Heart left ventricle (tissue), 16 donors: ENCODE measurements at regions of chr10 and their contacts with region 1.

Region 1: GRCh38 chr10:100338434-100339036 is 8.5 kb upstream of the SCD start:
- DNase-seq: peak; percentile 63 to 83 (median 68)
- ATAC-seq: peak; percentile 52 to 85 (median 76)
- H3K4me3 ChIP-seq: no peak overlapping the region
- H3K27ac ChIP-seq: no peak overlapping the region
- H3K4me1 ChIP-seq: peaks cover 0 to 25% (median 0%) of the 10 kb centered on the region in 12 donors
- H3K27me3 ChIP-seq: peaks cover 0 to 19% (median 3%) of the 10 kb centered on the region in 9 donors
- CTCF ChIP-seq: peak; percentile 82 to 96 (median 90)
- POLR2A ChIP-seq: no peak

Region 2: DNA sequence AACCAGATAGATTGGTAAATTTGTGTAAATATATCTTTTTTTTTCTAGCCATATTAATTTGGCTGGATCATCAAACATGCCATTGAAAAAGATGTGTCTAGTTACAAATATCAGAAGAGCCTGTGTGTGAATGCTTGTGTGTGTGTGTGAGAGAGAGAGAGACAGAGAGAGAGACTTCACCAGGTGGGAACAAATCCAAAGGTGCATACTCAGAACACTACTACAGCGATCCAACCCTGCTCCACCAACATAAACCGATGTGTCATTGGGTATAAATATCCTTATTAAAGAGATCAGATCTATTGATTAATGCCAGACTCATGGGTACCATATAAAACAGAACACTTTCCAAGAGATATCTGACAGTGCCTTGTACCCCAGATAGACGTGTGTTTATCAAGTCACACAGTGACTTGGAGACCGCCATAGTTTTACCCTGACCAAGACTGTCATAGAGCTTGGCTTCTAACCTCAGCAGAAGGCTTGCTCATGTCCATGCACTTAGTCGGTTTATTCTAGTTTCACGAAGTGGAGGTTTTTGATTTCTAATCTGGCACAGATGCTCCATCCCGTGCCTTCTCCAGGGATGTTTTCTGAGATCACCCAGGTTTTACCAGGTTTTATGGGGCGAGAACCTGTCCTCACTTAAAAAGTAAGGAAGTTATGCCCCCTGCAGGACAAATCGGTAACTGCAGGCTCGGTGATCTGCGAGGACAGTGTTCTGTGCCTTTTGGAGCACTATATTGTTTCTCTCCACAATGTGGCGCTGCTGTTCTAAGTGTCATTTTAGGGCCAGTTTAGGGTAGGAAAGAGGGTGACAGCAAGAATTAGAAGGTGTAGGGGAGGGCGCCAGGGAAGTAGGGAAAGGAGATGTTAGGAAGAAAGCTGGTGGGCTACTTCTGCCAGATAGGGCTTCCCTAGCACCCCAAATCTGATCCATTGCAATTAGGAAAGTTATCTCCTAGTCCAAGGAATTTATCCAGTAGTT is 95.0 kb after region 1 on chr10:
- intact Hi-C with region 1: loop called (anchors 1 to 2 kb)
- DNase-seq: peak; percentile 83 to 89 (median 88)
- ATAC-seq: peak; percentile 58 to 92 (median 91)
- H3K4me3 ChIP-seq: no peak overlapping the region
- H3K27ac ChIP-seq: no peak overlapping the region
- H3K4me1 ChIP-seq: no peaks in the 10 kb centered on the region
- H3K27me3 ChIP-seq: no peaks in the 10 kb centered on the region
- CTCF ChIP-seq: peak; percentile 95 to 100 (median 99)
- POLR2A ChIP-seq: no peak

Region 3: DNA sequence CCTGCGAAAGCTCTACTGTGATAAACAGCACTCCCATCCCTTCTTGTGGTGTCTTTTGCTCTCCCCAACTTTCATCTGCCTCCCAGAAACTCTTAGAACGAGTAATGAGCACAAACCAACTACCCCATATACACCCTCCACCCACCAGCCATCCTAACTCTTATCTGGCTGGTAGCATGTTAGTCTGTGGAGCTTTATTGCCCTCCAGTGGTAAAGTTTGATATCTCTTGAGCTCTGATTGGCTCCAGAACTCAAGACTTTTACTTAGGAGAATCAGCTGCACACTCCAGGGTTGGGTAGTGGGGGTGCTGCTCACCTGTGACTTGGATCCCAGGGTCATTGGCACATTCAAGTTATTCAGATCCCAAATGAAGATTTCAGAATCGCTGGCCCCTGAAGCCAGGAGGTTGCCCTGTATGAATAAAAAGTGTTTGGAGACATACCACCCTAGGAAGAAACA is 170.2 kb after region 1 on chr10:
- intact Hi-C with region 1: loop called in 2 of 10 experiments (anchors 10 kb)
- DNase-seq: no peak
- ATAC-seq: peak in 2 of 4 donors; percentile 26 to 44
- H3K4me3 ChIP-seq: no peak overlapping the region
- H3K27ac ChIP-seq: no peak overlapping the region
- H3K4me1 ChIP-seq: peaks cover 0 to 22% (median 0%) of the 10 kb centered on the region in 12 donors
- H3K27me3 ChIP-seq: no peaks in the 10 kb centered on the region
- CTCF ChIP-seq: peak in 6 of 12 donors; percentile 17 to 39 (median 22)
- POLR2A ChIP-seq: no peak

Region 4: DNA sequence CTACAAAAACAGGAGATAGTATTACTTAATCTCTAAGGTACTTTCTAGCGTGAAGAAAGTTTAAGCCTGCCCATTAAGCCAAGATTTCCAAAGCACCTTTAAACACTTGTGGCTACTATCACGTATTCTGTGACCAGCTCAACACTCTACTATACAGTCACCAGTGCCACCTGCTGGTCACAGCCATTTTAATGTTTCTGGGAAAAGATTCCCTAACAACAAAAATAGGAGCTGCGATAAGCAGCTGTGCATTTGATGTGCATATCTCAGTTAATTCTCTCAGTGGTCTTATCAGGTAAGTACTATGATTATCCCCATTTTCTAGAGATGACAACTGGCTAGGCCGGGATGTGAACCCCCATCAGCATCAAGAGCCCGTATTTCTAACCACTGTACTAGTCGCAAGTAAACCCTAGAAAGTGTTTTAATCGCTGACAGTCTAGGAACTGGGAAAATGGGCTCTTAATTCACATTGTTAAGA is 180.3 kb after region 1 on chr10:
- intact Hi-C with region 1: loop called in 9 of 10 experiments (anchors 2 to 10 kb)
- DNase-seq: peak in 4 of 5 donors; percentile 46 to 72 (median 52)
- ATAC-seq: peak; percentile 53 to 79 (median 69)
- H3K4me3 ChIP-seq: peak overlapping the region; percentile 52 to 82 (median 60)
- H3K27ac ChIP-seq: peak overlapping the region in 8 of 12 donors; percentile 36 to 75 (median 68)
- H3K4me1 ChIP-seq: peaks cover 0 to 18% (median 10%) of the 10 kb centered on the region in 12 donors
- H3K27me3 ChIP-seq: peaks cover 0 to 5% (median 0%) of the 10 kb centered on the region in 9 donors
- CTCF ChIP-seq: peak; percentile 51 to 76 (median 66)
- POLR2A ChIP-seq: no peak

Region 5: DNA sequence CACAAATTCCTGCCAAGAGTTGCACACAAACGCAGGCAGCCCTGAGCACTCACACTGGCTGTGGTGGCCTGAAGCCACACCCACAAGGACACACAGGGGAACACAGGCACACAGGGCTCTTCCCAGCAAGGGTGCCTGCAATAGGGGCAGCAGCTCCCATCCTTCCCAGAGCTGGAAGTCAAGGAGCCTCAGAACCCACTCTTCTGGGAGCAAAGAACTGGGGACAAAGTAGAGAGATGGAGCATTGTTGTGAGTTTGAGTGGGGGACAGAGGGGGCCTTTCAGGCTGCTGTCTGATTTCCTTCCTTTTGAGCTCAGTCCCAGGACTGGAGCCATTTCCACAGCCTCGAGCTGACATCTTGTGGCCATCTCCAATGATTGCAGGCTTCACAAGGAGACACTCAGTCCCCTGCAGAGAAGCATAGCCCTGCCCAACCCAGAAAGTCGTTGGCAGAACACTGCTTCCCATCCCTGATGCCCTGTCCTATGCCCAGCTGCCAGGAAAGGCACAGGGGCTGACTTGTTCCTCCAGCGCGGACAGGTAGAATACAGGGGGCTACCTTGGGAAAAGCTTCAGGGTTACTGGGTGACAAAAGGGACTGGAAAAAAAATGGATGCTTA is 539.9 kb after region 1 on chr10:
- intact Hi-C with region 1: loop called in 2 of 10 experiments (anchors 5 to 10 kb)
- DNase-seq: peak in 4 of 5 donors; percentile 36 to 60 (median 42)
- ATAC-seq: peak; percentile 72 to 90 (median 82)
- H3K4me3 ChIP-seq: no peak overlapping the region
- H3K27ac ChIP-seq: no peak overlapping the region
- H3K4me1 ChIP-seq: peaks cover 0 to 17% (median 0%) of the 10 kb centered on the region in 12 donors
- H3K27me3 ChIP-seq: peaks cover 0 to 39% (median 11%) of the 10 kb centered on the region in 9 donors
- CTCF ChIP-seq: peak; percentile 39 to 66 (median 57)
- POLR2A ChIP-seq: no peak

Region 6: DNA sequence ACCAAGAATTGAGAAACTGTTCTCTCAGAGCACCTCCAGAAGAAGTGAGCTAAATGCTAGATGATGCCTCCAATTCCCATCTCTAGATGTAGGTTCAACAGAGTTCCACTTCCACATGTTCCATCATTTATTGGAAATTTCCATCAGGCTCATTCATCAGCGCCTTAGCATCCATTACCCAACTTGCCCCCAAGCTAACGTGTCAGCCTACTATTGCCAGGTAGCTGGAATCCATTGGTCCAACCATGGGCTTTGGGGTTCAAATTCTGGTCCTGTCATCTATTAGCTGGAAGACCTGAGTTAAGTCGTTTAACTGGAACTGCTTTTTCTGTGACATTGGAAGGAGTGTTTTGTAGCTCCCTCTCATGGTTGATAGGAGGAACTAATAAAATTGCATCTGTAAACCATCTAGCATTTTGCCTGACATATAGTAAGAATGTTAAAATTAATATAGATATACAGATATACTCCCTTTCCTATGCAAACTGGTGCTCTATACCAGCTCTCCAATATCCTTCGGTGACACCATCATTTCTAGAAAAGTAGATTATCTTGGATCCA is 550.3 kb after region 1 on chr10:
- intact Hi-C with region 1: loop called in 1 of 10 experiments (anchors 5 kb)
- DNase-seq: no peak
- ATAC-seq: no peak
- H3K4me3 ChIP-seq: no peak overlapping the region
- H3K27ac ChIP-seq: no peak overlapping the region
- H3K4me1 ChIP-seq: peaks cover 0 to 11% (median 0%) of the 10 kb centered on the region in 12 donors
- H3K27me3 ChIP-seq: peaks cover 0 to 31% (median 4%) of the 10 kb centered on the region in 9 donors
- CTCF ChIP-seq: peak in 3 of 12 donors; percentile 16 to 27 (median 17)
- POLR2A ChIP-seq: no peak